CD14-positive monocyte (primary cell): ENCODE measurements at regions of chr4 and their contacts with region 1.

Region 1: GRCh38 chr4:75989846-75990528 is 758 bp downstream of the SDAD1 start:
- DNase-seq: no peak
- H3K4me3 ChIP-seq: peak overlapping the region; percentile 77 to 97 (median 94)
- H3K4me3 Mint-ChIP-seq: peak overlapping the region; percentile 88 to 94
- H3K27ac ChIP-seq: peak overlapping the region; percentile 74 to 88
- H3K27ac Mint-ChIP-seq: peak overlapping the region; percentile 83 to 95 (median 88)
- H3K4me1 ChIP-seq: peaks cover 23 to 24% of the 10 kb centered on the region in 2 donors
- H3K4me1 Mint-ChIP-seq: peaks cover 31% of the 10 kb centered on the region
- H3K27me3 ChIP-seq: peaks cover 0 to 2% of the 10 kb centered on the region in 2 donors
- H3K27me3 Mint-ChIP-seq: peaks cover 1 to 5% (median 1%) of the 10 kb centered on the region in 3 donors
- CTCF ChIP-seq: no peak

Region 2: DNA sequence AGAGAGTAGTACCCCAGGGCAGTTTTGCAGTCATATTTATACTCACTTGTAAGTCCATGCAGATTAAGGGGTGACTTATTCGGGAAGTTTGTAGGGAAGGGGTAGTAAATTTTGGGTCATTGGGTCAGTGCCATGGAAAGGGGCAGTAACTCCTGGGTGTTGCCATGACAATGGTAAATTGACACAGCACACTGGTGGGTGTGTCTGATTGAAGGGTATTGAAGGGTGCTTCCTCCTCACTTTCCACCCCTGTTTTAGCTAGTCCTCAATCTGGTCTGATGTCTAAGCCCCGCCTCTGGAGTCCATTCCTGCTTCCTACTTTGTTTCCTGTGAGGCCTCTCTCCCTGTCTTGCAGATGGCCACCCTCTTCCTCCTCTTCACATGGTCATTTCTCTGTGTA is 422.3 kb before region 1 on chr4:
- intact Hi-C with region 1: no loop called
- DNase-seq: no peak
- H3K4me3 ChIP-seq: peak overlapping the region in 1 of 3 experiments; percentile 36
- H3K4me3 Mint-ChIP-seq: peak overlapping the region in 1 of 2 donors; percentile 11
- H3K27ac ChIP-seq: peak overlapping the region in 1 of 2 donors; percentile 63
- H3K27ac Mint-ChIP-seq: peak overlapping the region in 5 of 7 donors; percentile 38 to 83 (median 73)
- H3K4me1 ChIP-seq: peaks cover 33 to 38% of the 10 kb centered on the region in 2 donors
- H3K4me1 Mint-ChIP-seq: peaks cover 38% of the 10 kb centered on the region
- H3K27me3 ChIP-seq: no peaks in the 10 kb centered on the region
- H3K27me3 Mint-ChIP-seq: peaks cover 0 to 1% (median 1%) of the 10 kb centered on the region in 3 donors
- CTCF ChIP-seq: no peak

Region 3: GRCh38 chr4:76148142-76148865 is 158.3 kb after region 1 on chr4 and contains the start of gene NUP54:
- intact Hi-C with region 1: loop called (anchors 2 to 5 kb)
- DNase-seq: peak; percentile 85 to 90 (median 88)
- H3K4me3 ChIP-seq: peak within 1 kb of the TSS; percentile 64 to 94 (median 88)
- H3K4me3 Mint-ChIP-seq: peak within 1 kb of the TSS; percentile 100
- H3K27ac ChIP-seq: peak within 1 kb of the TSS; percentile 85 to 92
- H3K27ac Mint-ChIP-seq: peak within 1 kb of the TSS; percentile 88 to 98 (median 94)
- H3K4me1 ChIP-seq: peaks cover 9 to 23% of the 10 kb centered on the region in 2 donors
- H3K4me1 Mint-ChIP-seq: peaks cover 26% of the 10 kb centered on the region
- H3K27me3 ChIP-seq: no peaks in the 10 kb centered on the region
- H3K27me3 Mint-ChIP-seq: peaks cover 0 to 3% (median 1%) of the 10 kb centered on the region in 3 donors
- CTCF ChIP-seq: no peak
- polyA plus RNA-seq, gene NUP54: 15.0 to 25.0 (median 16.2) TPM